Psoas muscle (tissue), 8 donors: ENCODE measurements at regions of chr3 and their contacts with region 1.

Region 1: GRCh38 chr3:10983219-10983916 is 9.2 kb upstream of the SLC6A1 start:
- DNase-seq: no peak
- ATAC-seq: peak; percentile 82 to 88 (median 87)
- H3K4me3 ChIP-seq: peak overlapping the region; percentile 4
- H3K27ac ChIP-seq: no peak overlapping the region
- H3K4me1 ChIP-seq: peaks cover 10% of the 10 kb centered on the region
- H3K27me3 ChIP-seq: no peaks in the 10 kb centered on the region
- CTCF ChIP-seq: peak; percentile 78

Region 2: GRCh38 chr3:10945683-10946287 is 37.6 kb before region 1 on chr3:
- intact Hi-C with region 1: loop called (anchors 1 to 2 kb)
- DNase-seq: peak; percentile 68 to 80
- ATAC-seq: peak; percentile 61 to 89 (median 88)
- H3K4me3 ChIP-seq: no peak overlapping the region
- H3K27ac ChIP-seq: no peak overlapping the region
- H3K4me1 ChIP-seq: no peaks in the 10 kb centered on the region
- H3K27me3 ChIP-seq: peaks cover 0 to 4% (median 0%) of the 10 kb centered on the region in 3 donors
- CTCF ChIP-seq: peak; percentile 81

Region 3: GRCh38 chr3:10955711-10956453 is 27.5 kb before region 1 on chr3:
- intact Hi-C with region 1: loop called in 1 of 2 experiments (anchors 2 kb)
- DNase-seq: peak; percentile 40 to 69
- ATAC-seq: peak; percentile 18 to 62 (median 52)
- H3K4me3 ChIP-seq: no peak overlapping the region
- H3K27ac ChIP-seq: peak overlapping the region; percentile 58
- H3K4me1 ChIP-seq: peaks cover 33% of the 10 kb centered on the region
- H3K27me3 ChIP-seq: no peaks in the 10 kb centered on the region
- CTCF ChIP-seq: no peak